MCF 10A (cell line): ENCODE measurements at regions of chr1 and their contacts with region 1.

Region 1: DNA sequence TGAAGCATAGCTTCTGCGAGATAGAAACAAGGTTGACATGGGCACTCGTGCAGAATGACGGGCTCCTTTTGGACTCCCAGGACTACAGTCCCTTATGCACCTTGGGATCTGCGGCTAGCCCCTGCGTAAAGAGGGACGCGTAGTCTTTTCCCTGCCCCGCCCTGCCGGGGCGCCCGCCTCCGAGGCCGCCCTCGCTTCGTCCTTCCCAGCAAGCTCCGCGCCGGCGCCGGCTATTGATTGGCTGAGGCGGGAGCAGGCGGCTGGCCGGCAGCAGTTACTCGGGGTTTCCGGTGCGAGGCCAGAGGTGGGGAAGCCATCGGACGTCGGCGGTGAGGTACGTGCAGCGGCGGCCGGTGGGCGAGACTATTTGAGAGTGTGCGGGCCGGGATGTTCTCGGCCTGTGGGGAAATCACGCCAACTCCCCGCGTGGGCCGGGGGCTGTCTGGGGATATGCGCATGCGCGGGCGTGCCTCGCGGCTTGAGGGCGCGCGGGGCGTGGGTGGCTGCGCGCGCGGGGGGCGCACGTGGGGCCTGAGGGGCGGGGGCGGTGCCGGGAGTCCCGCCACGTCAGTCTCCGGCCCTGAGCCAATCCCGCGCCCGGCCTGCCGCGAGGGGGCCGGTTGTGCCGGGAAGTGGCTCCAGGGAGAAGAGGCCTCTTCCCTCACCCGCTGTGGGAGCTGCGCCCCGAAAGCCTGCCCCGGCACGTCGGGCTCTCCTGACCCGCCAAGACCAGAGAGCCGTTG is at the start of gene TXLNA:
- DNase-seq: peak; percentile 92
- H3K4me3 Mint-ChIP-seq: peak within 1 kb of the TSS; percentile 97
- H3K27ac Mint-ChIP-seq: peak within 1 kb of the TSS; percentile 98
- H3K4me1 Mint-ChIP-seq: peaks cover 15% of the 10 kb centered on the region
- H3K27me3 Mint-ChIP-seq: no peaks in the 10 kb centered on the region
- CTCF ChIP-seq: no peak
- total RNA-seq, gene TXLNA: 61.8 and 64.8 TPM in 2 replicates

Region 2: GRCh38 chr1:32072622-32073298 is 106.9 kb before region 1 on chr1 and contains the start of gene TMEM39B:
- CTCF ChIA-PET with region 1: no interaction called
- POLR2A ChIA-PET with region 1: interaction called, 11 read pairs
- intact Hi-C with region 1: no loop called
- DNase-seq: peak; percentile 93
- H3K4me3 Mint-ChIP-seq: peak within 1 kb of the TSS; percentile 91
- H3K27ac Mint-ChIP-seq: peak within 1 kb of the TSS; percentile 85
- H3K4me1 Mint-ChIP-seq: peaks cover 23% of the 10 kb centered on the region
- H3K27me3 Mint-ChIP-seq: no peaks in the 10 kb centered on the region
- CTCF ChIP-seq: no peak
- total RNA-seq, gene TMEM39B: 15.0 and 22.3 TPM in 2 replicates

Region 3: DNA sequence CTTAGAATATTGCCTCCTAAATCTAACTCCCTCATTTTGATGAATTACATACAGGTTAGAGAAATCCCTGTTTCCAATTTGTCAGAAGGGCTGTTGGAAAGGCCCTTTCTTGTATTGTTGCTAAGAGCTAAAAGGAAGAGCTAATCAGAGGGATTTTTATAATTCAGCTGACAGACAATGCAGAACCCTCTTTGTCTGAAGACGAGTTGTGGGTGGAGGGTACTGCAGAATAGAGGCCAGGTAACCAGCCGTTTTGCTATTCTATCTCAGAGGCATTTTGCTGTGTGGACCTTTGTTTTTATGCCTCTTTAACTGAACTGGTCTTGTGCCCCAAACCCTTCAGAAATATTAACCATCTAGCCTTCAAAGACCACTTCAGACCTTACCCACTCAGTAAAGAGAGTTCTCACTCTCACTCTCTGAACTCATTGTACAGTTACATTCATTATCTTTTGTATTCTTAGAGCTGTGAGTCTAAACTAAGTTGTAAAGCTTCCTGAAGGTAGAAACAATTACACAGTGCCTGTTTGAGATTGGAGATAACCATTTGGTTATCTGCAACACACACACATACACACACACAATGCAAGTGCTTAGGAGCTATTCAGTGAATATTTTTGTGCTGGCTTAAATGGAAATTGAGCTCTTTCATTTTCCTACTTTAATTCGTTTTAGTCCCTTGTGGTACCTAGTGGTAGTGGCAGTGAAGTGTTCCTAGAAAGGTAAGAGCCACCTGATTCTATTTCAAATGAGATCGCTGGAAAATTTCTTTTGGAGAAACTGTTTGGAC is 52.0 kb before region 1 on chr1:
- CTCF ChIA-PET with region 1: interaction called, 3 read pairs
- POLR2A ChIA-PET with region 1: interaction called, 3 read pairs
- intact Hi-C with region 1: loop called (anchors 2 kb)
- DNase-seq: no peak
- H3K4me3 Mint-ChIP-seq: no peak overlapping the region
- H3K27ac Mint-ChIP-seq: no peak overlapping the region
- H3K4me1 Mint-ChIP-seq: peaks cover 20% of the 10 kb centered on the region
- H3K27me3 Mint-ChIP-seq: no peaks in the 10 kb centered on the region
- CTCF ChIP-seq: no peak

Region 4: DNA sequence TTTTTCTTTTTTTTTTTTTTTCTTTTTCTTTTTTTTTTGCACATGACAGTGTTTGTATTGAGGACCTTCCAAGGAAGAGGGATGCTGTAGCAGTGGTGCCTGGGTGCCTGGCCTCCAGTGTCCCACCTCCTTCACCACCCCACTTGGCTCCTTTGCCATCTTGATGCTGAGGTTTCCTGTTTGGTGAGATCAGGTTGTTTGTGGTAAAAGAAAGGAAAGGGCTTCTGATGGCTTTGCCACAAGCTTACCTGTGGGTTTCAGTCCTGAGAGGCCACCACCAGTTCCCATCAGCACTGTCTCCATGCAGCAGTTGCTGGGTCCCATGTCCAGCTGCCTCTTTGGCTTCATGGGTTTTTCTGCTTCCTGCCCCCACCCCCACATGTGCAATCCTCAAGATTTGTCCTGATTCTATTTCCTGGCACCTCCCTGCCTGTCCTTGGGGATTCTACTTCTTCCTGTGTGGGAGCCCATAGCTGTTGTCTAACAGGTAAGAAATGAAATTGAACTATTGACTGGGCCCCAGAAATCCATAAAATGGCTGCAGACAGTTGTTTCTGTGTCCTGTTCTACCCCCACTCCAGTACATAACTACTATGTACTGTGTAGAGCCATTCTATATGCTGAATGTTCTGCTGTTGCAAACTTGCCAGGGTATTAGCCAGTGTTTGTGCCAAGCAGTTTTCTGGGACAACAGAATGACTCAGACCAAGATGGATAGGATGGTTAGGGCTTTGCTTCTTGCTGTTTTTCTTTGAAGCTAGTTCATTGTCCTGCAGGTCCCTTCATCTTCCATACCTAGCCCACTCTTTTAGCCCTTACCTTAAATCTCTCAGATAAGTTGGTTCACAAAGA is 16.6 kb after region 1 on chr1:
- CTCF ChIA-PET with region 1: no interaction called
- POLR2A ChIA-PET with region 1: interaction called, 13 read pairs
- intact Hi-C with region 1: no loop called
- DNase-seq: no peak
- H3K4me3 Mint-ChIP-seq: no peak overlapping the region
- H3K27ac Mint-ChIP-seq: peak overlapping the region; percentile 46
- H3K4me1 Mint-ChIP-seq: peaks cover 6% of the 10 kb centered on the region
- H3K27me3 Mint-ChIP-seq: no peaks in the 10 kb centered on the region
- CTCF ChIP-seq: no peak

Region 5: GRCh38 chr1:32205401-32206370 is 26.1 kb after region 1 on chr1 and contains the start of gene IQCC:
- CTCF ChIA-PET with region 1: interaction called, 4 read pairs
- POLR2A ChIA-PET with region 1: interaction called, 11 read pairs
- intact Hi-C with region 1: no loop called
- DNase-seq: peak; percentile 83
- H3K4me3 Mint-ChIP-seq: peak within 1 kb of the TSS; percentile 78
- H3K27ac Mint-ChIP-seq: peak within 1 kb of the TSS; percentile 95
- H3K4me1 Mint-ChIP-seq: peaks cover 15% of the 10 kb centered on the region
- H3K27me3 Mint-ChIP-seq: no peaks in the 10 kb centered on the region
- CTCF ChIP-seq: no peak
- total RNA-seq, gene IQCC: 1.8 and 1.9 TPM in 2 replicates

Region 6: DNA sequence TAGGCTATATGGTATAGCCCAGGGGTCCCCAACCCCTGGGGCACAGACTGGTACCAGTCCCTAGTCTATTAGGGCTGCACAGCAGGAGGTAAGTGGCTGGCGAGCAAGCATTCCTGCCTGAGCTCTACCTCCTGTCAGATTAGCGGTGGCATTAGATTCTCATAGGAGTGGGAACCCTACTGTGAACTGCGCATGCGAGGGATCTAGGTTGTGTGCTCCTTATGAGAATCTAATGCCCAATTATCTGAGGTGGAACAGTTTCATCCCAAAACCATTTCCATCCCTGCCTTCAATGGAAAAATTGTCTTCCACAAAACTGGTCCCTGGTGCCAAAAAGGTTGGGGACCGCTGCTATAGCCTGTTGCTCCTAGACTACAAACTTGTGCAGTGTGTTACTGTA is 336.8 kb after region 1 on chr1:
- CTCF ChIA-PET with region 1: no interaction called
- POLR2A ChIA-PET with region 1: no interaction called
- intact Hi-C with region 1: no loop called
- DNase-seq: no peak
- H3K4me3 Mint-ChIP-seq: no peak overlapping the region
- H3K27ac Mint-ChIP-seq: no peak overlapping the region
- H3K4me1 Mint-ChIP-seq: peaks cover 5% of the 10 kb centered on the region
- H3K27me3 Mint-ChIP-seq: no peaks in the 10 kb centered on the region
- CTCF ChIP-seq: no peak